ENCODE measurements at regions of chr3 and their contacts with region 1.

Region 1: GRCh38 chr3:184341929-184342328 is 4.5 kb downstream of the FAM131A start:
- DNase-seq: no peak
- H3K4me3 ChIP-seq: no peak overlapping the region
- H3K27ac ChIP-seq: no peak overlapping the region
- H3K4me1 ChIP-seq: peaks cover 12 to 29% of the 10 kb centered on the region in 2 donors
- H3K27me3 ChIP-seq: no peaks in the 10 kb centered on the region
- CTCF ChIP-seq: no peak
- POLR2A ChIP-seq: no peak

Region 2: GRCh38 chr3:184305577-184305976 is 36.4 kb before region 1 on chr3:
- intact Hi-C with region 1: loop called in 1 of 2 experiments (anchors 5 kb)
- DNase-seq: no peak
- H3K4me3 ChIP-seq: no peak overlapping the region
- H3K27ac ChIP-seq: no peak overlapping the region
- H3K4me1 ChIP-seq: peaks cover 0 to 1% of the 10 kb centered on the region in 2 donors
- H3K27me3 ChIP-seq: no peaks in the 10 kb centered on the region
- CTCF ChIP-seq: peak in 5 of 6 experiments; percentile 15 to 32 (median 29)
- POLR2A ChIP-seq: no peak

Region 3: GRCh38 chr3:184711493-184712247 is 369.7 kb after region 1 on chr3 and contains the start of gene MAGEF1:
- intact Hi-C with region 1: no loop called
- DNase-seq: peak; percentile 69 to 87 (median 80)
- H3K4me3 ChIP-seq: peak within 1 kb of the TSS; percentile 26 to 86 (median 79)
- H3K27ac ChIP-seq: peak within 1 kb of the TSS; percentile 47 to 93 (median 92)
- H3K4me1 ChIP-seq: peaks cover 8 to 23% of the 10 kb centered on the region in 2 donors
- H3K27me3 ChIP-seq: no peaks in the 10 kb centered on the region
- CTCF ChIP-seq: peak in 2 of 6 experiments; percentile 10 to 17
- POLR2A ChIP-seq: peak; percentile 66 to 75
- total RNA-seq, gene MAGEF1: 23.7 to 69.1 (median 36.7) TPM

Measured in adrenal gland (tissue), 19 donors.